ENCODE measurements at regions of chr7 and their contacts with region 1.

Region 1: GRCh38 chr7:69932034-69932628 is 333.9 kb downstream of the AUTS2 start:
- DNase-seq: no peak
- ATAC-seq: no peak
- H3K4me3 Mint-ChIP-seq: no peak overlapping the region
- H3K27ac Mint-ChIP-seq: no peak overlapping the region
- H3K4me1 Mint-ChIP-seq: peaks cover 15% of the 10 kb centered on the region
- H3K27me3 Mint-ChIP-seq: no peaks in the 10 kb centered on the region
- CTCF ChIP-seq: no peak

Region 2: GRCh38 chr7:68063166-68063565 is 1869.0 kb before region 1 on chr7:
- CTCF ChIA-PET with region 1: no interaction called
- POLR2A ChIA-PET with region 1: no interaction called
- intact Hi-C with region 1: loop called (anchors 5 kb)
- DNase-seq: no peak
- ATAC-seq: no peak
- H3K4me3 Mint-ChIP-seq: no peak overlapping the region
- H3K27ac Mint-ChIP-seq: no peak overlapping the region
- H3K4me1 Mint-ChIP-seq: no peaks in the 10 kb centered on the region
- H3K27me3 Mint-ChIP-seq: no peaks in the 10 kb centered on the region
- CTCF ChIP-seq: no peak

Region 3: GRCh38 chr7:70027867-70028266 is 95.7 kb after region 1 on chr7:
- CTCF ChIA-PET with region 1: no interaction called
- POLR2A ChIA-PET with region 1: no interaction called
- intact Hi-C with region 1: no loop called
- DNase-seq: no peak
- ATAC-seq: peak; percentile 10
- H3K4me3 Mint-ChIP-seq: no peak overlapping the region
- H3K27ac Mint-ChIP-seq: no peak overlapping the region
- H3K4me1 Mint-ChIP-seq: peaks cover 27% of the 10 kb centered on the region
- H3K27me3 Mint-ChIP-seq: no peaks in the 10 kb centered on the region
- CTCF ChIP-seq: no peak